ENCODE measurements at regions of chr7 and their contacts with region 1.

Region 1: DNA sequence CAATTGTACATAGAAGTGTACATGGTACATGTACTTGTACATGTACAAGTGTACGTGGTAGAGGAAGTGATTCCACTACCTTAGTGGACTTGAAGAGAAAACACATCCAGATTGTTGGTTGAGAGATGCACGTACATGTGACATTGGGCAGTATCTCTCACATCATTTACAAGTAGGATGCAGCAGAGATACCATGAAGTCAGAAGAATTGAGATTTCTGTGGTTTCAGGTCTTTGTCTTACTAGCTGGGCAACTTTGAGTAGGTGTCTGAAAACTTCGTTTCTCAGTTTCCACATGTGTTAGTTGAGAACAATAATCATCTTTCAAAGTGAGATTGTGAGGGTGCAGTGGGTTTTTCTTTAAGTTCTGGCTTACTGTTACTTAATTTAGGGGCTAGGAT is 21.5 kb downstream of the CLDN12 start:
- DNase-seq: no peak
- H3K27ac ChIP-seq: no peak overlapping the region
- CTCF ChIP-seq: no peak

Region 2: GRCh38 chr7:90155206-90155605 is 269.5 kb before region 1 on chr7:
- CTCF ChIA-PET with region 1: interaction called, 12 read pairs
- POLR2A ChIA-PET with region 1: interaction called, 3 read pairs
- DNase-seq: no peak
- H3K27ac ChIP-seq: no peak overlapping the region
- CTCF ChIP-seq: no peak

Region 3: DNA sequence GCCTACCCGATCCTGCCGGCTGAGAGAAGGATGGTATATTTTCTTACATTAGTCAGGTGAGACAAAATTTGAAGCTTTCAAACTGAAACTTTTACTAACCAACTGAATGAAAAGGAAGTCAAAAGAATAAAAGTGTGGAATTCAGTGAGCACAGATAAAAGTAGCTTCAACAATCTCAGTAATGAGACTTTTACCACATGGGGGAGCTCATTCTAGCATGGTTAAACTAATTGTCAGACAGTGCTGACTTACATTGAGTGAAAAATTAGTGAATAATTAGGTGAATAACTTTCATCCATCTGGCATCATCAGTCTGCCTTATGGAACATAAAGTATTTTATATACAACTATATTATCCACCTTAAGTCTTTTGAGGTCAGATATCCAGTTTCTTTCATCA is 112.0 kb before region 1 on chr7:
- CTCF ChIA-PET with region 1: interaction called, 10 read pairs
- POLR2A ChIA-PET with region 1: no interaction called
- DNase-seq: no peak
- H3K27ac ChIP-seq: no peak overlapping the region
- CTCF ChIP-seq: 0 out of 2 replicates have a peak, but pooled peaks have one; percentile 9

Region 4: GRCh38 chr7:90337106-90337505 is 87.6 kb before region 1 on chr7:
- CTCF ChIA-PET with region 1: no interaction called
- POLR2A ChIA-PET with region 1: no interaction called
- DNase-seq: no peak
- H3K27ac ChIP-seq: no peak overlapping the region
- CTCF ChIP-seq: no peak